Left cardiac atrium (tissue), 4 donors: ENCODE measurements at regions of chr6 and their contacts with region 1.

Region 1: DNA sequence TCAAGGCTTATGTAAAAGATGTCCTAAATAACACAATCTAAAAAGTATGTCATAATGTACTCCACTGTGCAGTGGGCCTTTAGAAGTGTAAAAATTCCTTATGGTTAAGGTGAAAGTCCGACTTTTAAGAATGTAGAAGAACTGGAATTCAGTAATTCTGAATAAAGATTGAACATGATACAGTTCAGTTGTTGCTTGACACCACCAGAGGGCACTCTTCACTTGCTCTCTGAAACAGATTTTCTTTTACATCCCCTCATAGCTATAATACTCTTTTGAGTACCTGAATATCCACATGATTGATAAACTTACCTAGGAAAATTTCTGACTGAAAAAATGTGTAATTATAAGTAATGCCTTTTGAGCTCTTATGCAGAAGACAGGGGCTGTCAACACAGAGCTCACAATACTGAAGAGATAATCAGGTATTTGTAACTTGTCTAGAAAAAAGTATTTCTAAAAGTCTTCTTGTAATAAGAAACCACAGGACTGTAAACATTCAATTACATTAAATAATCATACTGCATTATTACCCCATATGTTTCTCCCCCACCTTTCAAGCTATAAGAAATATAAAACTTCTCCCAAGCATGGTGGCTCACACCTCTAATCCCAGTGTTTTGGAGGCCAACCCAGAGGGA is 92.1 kb downstream of the POPDC3 start:
- DNase-seq: no peak
- ATAC-seq: peak in 1 of 2 donors; percentile 53

Region 2: GRCh38 chr6:104843200-104843599 is 244.5 kb before region 1 on chr6:
- intact Hi-C with region 1: no loop called
- DNase-seq: no peak
- ATAC-seq: no peak

Region 3: GRCh38 chr6:105363100-105363754 is 275.5 kb after region 1 on chr6:
- intact Hi-C with region 1: loop called in 1 of 2 experiments (anchors 5 kb)
- DNase-seq: no peak
- ATAC-seq: no peak

Region 4: DNA sequence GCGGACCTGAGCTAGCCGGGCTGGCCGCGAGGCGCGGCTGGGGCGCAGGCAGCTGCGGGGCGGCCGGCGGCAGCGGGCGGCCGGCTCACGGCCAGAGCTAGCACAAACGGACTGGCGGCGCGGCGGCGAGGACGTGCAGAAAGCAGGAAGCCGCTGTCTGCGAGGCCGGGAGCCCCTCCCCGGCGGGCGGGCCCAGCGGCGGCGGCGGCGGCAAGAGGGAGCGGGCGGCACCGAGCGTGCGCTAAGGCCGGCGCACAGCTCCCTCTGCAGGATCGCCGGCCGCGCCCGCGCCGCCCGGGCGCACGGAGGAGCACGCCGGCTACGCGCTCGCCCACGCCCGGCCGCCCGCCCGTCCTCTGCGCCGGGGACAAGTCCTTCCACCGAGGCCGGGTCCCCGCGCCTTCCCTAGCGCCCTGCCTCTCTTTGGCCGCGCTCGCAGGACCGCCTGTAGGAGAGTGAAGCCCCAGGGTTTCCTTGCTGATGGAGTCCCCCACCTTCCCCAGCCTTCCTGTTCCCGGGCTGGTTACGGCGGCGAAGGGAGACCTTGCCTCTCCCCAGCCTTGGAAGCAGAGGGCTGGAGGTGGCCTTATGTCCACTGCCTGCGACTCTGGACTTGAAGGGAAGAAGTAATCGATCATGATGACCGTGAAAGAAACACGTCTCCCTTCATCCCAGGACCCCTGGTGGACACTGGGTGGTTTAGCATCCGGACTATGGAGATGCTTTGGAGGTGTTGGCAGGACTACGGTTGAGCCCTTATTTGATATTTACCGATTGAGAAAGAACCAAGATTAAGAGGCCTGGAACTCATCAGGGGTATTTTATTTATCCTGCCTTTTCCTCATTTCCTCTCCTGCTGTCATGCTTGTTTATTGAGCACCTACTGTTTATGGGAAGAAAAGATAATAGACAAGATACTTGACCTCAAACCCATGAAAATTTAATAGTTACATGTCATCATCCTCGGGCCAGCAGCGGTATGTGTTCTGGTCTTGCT is 315.5 kb after region 1 on chr6 and contains the start of gene PREP:
- intact Hi-C with region 1: loop called (anchors 2 to 10 kb)
- DNase-seq: peak; percentile 91
- ATAC-seq: peak; percentile 98 to 99
- total RNA-seq, gene PREP: 23.8 to 29.6 TPM

Region 5: GRCh38 chr6:105424175-105424783 is 336.6 kb after region 1 on chr6:
- intact Hi-C with region 1: loop called in 1 of 2 experiments (anchors 2 kb)
- DNase-seq: no peak
- ATAC-seq: peak in 1 of 2 donors; percentile 63